CD4-positive, alpha-beta T cell (primary cell): ENCODE measurements at regions of chr18 and their contacts with region 1.

Region 1: DNA sequence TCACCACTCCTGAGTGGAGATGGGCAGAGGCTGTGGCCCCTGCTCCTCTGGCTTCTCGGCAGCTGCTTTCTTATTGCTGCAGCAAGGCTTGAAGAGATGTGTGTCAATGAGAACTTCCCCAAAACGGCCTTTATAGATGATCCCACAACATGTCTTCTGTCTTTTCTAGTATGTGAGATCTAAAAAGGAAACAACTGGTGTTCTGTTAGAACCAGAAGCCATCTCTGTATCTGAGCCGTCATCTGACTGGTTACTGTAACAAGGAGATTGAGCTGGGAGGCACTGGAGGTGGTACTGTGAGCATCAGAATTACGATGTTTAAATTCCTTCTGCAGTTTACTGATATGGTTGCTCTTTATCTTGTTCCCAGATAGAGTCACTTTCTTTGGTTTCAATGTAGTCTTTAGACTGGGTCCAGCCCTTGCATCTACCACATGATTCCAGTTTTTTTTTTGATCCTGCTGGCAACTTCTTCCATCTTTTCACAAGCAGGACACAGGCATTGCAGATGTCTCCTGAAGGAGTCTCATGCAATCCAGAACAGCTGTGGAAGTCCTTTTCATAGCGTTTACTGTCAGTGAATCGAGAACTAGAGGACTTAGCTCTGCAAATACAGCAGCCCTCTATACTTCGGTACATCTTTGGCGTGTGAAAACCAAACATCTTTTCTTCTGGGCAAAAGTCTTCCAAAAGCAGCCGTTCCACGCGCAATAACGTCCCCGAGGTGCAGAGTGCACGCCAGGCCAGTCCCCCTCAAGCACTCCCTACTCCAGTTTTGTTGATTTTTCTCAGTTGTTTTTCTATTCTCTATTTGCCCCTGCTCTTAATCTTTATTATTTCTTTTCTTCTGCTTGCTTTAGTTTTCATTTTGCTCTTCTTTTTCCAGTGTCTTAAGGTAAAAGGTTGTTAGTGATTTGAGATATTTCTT is 29.7 kb downstream of the TAF4B start:
- DNase-seq: no peak
- ATAC-seq: peak; percentile 17
- H3K4me3 ChIP-seq: no peak overlapping the region
- H3K4me3 Mint-ChIP-seq: peak overlapping the region; percentile 3
- H3K27ac ChIP-seq: no peak overlapping the region
- H3K27ac Mint-ChIP-seq: no peak overlapping the region
- H3K4me1 ChIP-seq: no peaks in the 10 kb centered on the region
- H3K4me1 Mint-ChIP-seq: peaks cover 26% of the 10 kb centered on the region
- H3K27me3 ChIP-seq: no peaks in the 10 kb centered on the region
- H3K27me3 Mint-ChIP-seq: no peaks in the 10 kb centered on the region
- CTCF ChIP-seq: no peak

Region 2: DNA sequence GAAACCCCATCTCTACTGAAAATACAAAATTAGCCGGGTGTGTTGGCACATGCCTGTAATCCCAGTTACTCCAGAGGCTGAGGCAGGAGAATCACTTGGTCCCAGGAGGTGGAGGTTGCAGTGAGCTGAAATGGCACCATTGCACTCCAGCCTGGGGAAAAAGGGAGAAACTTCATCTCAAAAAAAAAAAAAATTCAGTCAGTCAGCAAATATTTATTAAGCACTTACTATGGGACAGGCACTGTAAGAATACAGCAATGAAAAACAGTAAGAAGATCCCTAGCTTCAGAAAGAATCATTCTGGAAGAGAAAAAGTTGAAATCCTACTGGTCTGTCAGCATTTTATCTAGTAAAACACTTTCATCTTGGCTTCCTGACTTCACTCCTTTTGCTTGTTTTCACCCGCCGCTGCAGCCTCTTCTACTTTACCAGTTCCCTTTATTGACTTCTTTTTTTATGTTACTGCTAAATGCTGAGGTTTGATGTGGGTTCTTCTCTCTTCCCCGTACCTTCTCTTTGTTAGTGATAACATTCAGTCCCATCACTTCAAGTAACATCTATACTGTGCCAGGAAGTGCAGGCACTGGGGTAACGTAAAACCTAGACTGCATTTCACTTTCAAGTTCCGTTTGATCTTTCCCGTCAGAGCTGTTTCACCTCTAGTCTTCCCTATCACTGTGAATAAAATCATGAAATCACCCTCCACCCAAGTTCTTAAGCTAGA is 40.5 kb before region 1 on chr18:
- CTCF ChIA-PET with region 1: no interaction called
- POLR2A ChIA-PET with region 1: no interaction called
- intact Hi-C with region 1: loop called in 1 of 2 experiments (anchors 5 kb)
- DNase-seq: peak; percentile 22 to 86 (median 53)
- ATAC-seq: peak; percentile 98
- H3K4me3 ChIP-seq: peak overlapping the region; percentile 34
- H3K4me3 Mint-ChIP-seq: peak overlapping the region; percentile 49
- H3K27ac ChIP-seq: peak overlapping the region in 1 of 2 donors; percentile 50
- H3K27ac Mint-ChIP-seq: peak overlapping the region; percentile 77
- H3K4me1 ChIP-seq: peaks cover 18% of the 10 kb centered on the region
- H3K4me1 Mint-ChIP-seq: peaks cover 26% of the 10 kb centered on the region
- H3K27me3 ChIP-seq: no peaks in the 10 kb centered on the region
- H3K27me3 Mint-ChIP-seq: no peaks in the 10 kb centered on the region
- CTCF ChIP-seq: no peak

Region 3: DNA sequence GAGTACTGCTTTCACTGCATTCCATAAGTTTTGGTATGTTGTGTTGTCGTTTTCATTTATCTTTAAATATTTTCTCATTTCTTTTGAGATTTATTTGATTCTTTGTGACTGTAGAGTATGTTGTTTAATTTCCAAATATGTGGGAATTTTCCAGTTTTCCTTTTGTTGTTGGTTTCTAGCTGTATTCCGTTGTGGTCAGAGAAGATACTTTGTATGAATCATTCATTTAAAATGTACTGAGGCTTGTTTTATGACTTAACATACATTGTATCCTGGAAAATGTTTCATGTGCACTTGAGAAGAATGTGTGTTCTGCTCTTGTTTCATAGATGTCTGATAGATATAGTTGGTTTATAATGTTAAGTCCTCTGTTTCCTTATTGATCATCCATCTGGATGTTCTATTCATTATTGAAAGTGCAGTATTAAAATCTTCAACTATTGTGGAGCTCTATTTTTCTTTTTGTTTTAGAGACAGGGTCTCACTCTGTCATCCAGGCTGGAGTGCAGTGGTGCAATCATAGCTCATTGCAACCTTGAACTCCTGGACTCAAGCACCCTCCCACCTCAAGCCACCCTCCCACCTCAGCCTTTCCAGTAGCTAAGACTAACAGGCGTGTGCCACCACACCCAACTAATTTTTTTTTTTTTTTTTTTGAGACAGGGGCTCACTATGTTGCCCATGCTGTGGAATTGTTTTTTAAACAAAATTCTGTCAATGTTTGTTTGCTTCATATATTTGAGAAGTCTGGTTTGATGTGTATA is 67.1 kb after region 1 on chr18:
- CTCF ChIA-PET with region 1: no interaction called
- POLR2A ChIA-PET with region 1: no interaction called
- intact Hi-C with region 1: no loop called
- DNase-seq: no peak
- ATAC-seq: no peak
- H3K4me3 ChIP-seq: no peak overlapping the region
- H3K4me3 Mint-ChIP-seq: no peak overlapping the region
- H3K27ac ChIP-seq: no peak overlapping the region
- H3K27ac Mint-ChIP-seq: no peak overlapping the region
- H3K4me1 ChIP-seq: no peaks in the 10 kb centered on the region
- H3K4me1 Mint-ChIP-seq: no peaks in the 10 kb centered on the region
- H3K27me3 ChIP-seq: no peaks in the 10 kb centered on the region
- H3K27me3 Mint-ChIP-seq: no peaks in the 10 kb centered on the region
- CTCF ChIP-seq: no peak